Activated CD8-positive, alpha-beta T cell treated with anti-CD3 and anti-CD28 coated beads, Interleukin-2, amount 10 ng/mL, durations not matched to agents 7 days and 5 days (primary cell): ENCODE measurements at regions of chr17 and their contacts with region 1.

Region 1: DNA sequence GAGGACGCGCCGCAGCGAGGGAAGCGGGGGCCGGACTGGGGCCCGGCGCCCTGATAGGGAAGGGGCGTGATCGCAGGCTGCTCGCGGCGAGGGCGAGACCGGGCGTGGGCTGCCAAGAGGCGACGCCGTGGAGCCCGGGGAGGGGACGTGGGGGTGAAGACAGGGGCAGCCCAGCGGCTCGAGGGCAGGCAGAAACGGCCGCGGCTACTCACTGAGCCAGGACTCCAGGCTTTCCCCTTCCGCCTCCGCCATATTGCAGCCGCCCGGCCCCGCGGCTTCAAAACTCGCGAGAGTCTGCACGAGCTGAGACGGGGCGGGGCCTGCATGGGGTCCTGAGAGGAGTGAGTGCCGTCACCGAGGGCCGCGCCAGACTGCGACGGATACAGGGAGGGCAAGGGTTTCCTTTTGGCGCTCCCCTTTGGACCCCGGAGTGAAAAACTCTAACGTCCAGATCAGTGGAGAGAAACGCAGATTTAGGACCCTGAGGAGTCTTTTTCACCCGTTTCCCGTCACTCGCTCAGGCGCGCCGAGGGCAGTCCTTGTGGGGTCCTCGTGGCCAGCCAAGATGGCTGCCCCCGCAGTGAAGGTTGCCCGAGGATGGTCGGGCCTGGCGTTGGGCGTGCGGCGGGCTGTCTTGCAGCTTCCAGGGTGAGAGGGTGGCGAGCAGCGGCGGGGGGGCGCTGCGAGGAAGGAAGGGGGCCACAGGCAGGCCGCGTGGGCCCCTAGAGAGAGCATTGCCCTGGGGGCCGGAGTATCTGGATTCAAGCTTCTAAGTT is at the starts of genes GGA3 and MRPS7:
- DNase-seq: peak; percentile 97
- ATAC-seq: peak; percentile 94
- H3K4me3 Mint-ChIP-seq: peak within 1 kb of the TSS; percentile 95
- H3K27ac Mint-ChIP-seq: peak within 1 kb of the TSS; percentile 99
- H3K4me1 Mint-ChIP-seq: peaks cover 38% of the 10 kb centered on the region
- H3K27me3 Mint-ChIP-seq: no peaks in the 10 kb centered on the region
- total RNA-seq, gene GGA3: 65.7 to 75.4 TPM
- total RNA-seq, gene MRPS7: 62.1 to 66.1 TPM

Region 2: GRCh38 chr17:75205037-75205792 is 56.3 kb before region 1 on chr17 and contains the start of gene NUP85:
- CTCF ChIA-PET with region 1: interaction called, 7 read pairs
- POLR2A ChIA-PET with region 1: interaction called, 16 read pairs
- DNase-seq: peak; percentile 94
- ATAC-seq: peak; percentile 87
- H3K4me3 Mint-ChIP-seq: peak within 1 kb of the TSS; percentile 97
- H3K27ac Mint-ChIP-seq: peak within 1 kb of the TSS; percentile 100
- H3K4me1 Mint-ChIP-seq: peaks cover 35% of the 10 kb centered on the region
- H3K27me3 Mint-ChIP-seq: no peaks in the 10 kb centered on the region
- total RNA-seq, gene NUP85: 135 TPM

Region 3: GRCh38 chr17:75238684-75239191 is 22.8 kb before region 1 on chr17:
- CTCF ChIA-PET with region 1: interaction called, 21 read pairs
- POLR2A ChIA-PET with region 1: interaction called, 14 read pairs
- DNase-seq: peak; percentile 76
- ATAC-seq: peak; percentile 86
- H3K4me3 Mint-ChIP-seq: no peak overlapping the region
- H3K27ac Mint-ChIP-seq: no peak overlapping the region
- H3K4me1 Mint-ChIP-seq: peaks cover 23% of the 10 kb centered on the region
- H3K27me3 Mint-ChIP-seq: no peaks in the 10 kb centered on the region

Region 4: GRCh38 chr17:75250009-75250471 is 11.5 kb before region 1 on chr17:
- CTCF ChIA-PET with region 1: interaction called, 31 read pairs
- POLR2A ChIA-PET with region 1: interaction called, 64 read pairs
- DNase-seq: peak; percentile 75
- ATAC-seq: peak; percentile 94
- H3K4me3 Mint-ChIP-seq: peak overlapping the region; percentile 60
- H3K27ac Mint-ChIP-seq: peak overlapping the region; percentile 86
- H3K4me1 Mint-ChIP-seq: peaks cover 25% of the 10 kb centered on the region
- H3K27me3 Mint-ChIP-seq: no peaks in the 10 kb centered on the region

Region 5: DNA sequence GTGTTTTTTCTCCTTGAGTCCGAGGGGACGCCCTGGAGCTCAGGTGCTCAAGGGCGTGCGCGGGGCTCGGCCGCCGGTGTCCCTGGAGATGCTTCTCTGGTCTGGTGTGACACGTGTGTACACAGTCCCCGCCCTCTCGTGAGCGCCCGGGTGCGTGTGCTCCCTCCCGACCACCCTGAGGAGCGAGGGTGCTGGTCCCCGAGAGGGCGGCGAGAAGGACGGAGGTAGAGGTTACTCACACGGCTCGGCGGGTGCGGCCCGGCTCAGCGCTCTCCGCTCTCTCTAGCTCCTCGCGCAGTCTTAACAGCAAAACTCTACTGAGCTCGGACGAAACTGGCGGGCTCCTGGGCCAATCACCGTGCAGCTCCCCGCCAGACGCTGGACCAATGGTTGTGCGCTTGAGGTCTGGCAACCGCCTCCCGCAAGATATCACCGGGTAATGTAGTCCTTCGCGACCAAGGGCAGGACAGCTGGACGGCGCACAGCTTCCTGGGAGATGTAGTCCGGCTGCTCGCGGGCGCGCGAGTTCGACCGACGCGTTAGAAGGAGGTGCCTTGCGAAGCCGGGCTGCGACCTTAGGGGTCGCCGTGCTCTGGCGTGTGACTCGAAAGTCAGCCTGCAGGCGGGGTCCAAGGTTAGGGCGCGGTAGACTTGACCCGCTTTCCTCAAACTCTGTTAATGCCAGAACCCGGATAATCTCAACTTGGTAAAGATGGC is 27.7 kb after region 1 on chr17 and contains the start of gene SLC25A19:
- CTCF ChIA-PET with region 1: interaction called, 9 read pairs
- POLR2A ChIA-PET with region 1: interaction called, 28 read pairs
- DNase-seq: peak; percentile 99
- ATAC-seq: peak; percentile 92
- H3K4me3 Mint-ChIP-seq: peak within 1 kb of the TSS; percentile 97
- H3K27ac Mint-ChIP-seq: peak within 1 kb of the TSS; percentile 100
- H3K4me1 Mint-ChIP-seq: peaks cover 27% of the 10 kb centered on the region
- H3K27me3 Mint-ChIP-seq: no peaks in the 10 kb centered on the region
- total RNA-seq, gene SLC25A19: 41.1 to 43.6 TPM

Region 6: GRCh38 chr17:75405365-75406221 is 144.1 kb after region 1 on chr17 and contains the start of gene GRB2:
- CTCF ChIA-PET with region 1: interaction called, 4 read pairs
- POLR2A ChIA-PET with region 1: interaction called, 13 read pairs
- DNase-seq: peak; percentile 100
- ATAC-seq: peak; percentile 87
- H3K4me3 Mint-ChIP-seq: peak within 1 kb of the TSS; percentile 97
- H3K27ac Mint-ChIP-seq: peak within 1 kb of the TSS; percentile 95
- H3K4me1 Mint-ChIP-seq: peaks cover 49% of the 10 kb centered on the region
- H3K27me3 Mint-ChIP-seq: no peaks in the 10 kb centered on the region
- total RNA-seq, gene GRB2: 166 to 178 TPM